ENCODE measurements at regions of chr6 and their contacts with region 1.

Region 1: GRCh38 chr6:41713161-41713649 is 22.2 kb downstream of the TFEB start:
- DNase-seq: peak; percentile 89 to 93
- H3K4me3 ChIP-seq: no peak overlapping the region
- H3K27ac ChIP-seq: peak overlapping the region; percentile 58
- H3K4me1 ChIP-seq: peaks cover 35% of the 10 kb centered on the region
- H3K27me3 ChIP-seq: no peaks in the 10 kb centered on the region
- CTCF ChIP-seq: no peak

Region 2: DNA sequence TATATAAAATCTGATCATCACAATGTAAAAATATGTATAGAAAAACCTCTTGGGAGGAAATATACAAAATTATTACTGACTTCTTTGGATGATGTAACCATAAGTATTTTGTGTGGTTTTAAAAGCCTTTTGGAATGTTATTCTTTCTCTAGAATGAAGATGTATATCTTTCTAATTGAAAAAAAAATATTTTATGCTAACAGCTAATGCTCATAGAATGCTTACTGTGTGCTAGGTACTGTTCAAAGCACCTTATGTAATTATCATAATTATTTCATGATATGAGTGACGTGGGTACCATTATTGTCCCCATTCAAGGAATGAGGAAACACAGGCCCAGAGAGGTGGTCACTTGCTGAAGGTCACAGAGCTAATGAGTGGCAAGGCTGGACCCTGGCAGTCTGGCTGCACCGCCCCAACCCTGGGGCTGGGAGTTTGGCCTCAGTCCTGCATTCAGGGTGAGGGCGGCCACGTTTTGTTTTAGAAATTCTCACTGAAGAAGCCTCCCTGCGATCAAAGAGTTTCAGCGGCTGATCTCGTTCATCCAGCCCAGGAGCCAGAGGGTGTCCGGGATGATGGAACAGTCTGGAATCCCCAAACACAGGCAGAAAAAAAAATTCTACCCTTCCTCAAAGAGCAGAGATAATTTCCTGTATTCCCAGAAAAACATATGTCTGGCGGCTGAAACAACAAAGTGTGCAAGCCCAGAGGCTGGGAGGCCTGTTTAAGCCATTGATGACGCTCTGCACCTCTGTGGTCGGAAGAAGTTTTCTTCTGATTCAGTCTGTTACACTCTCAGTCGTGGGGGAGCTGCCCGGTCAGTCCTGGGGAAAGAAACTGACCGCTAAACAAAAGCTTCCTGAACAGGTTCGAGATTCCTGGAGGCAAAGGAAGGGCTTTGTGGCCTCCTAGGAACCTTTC is 15.1 kb before region 1 on chr6:
- CTCF ChIA-PET with region 1: interaction called, 6 read pairs
- POLR2A ChIA-PET with region 1: interaction called, 6 read pairs
- intact Hi-C with region 1: loop called (anchors 1 kb)
- DNase-seq: peak; percentile 65 to 85
- H3K4me3 ChIP-seq: no peak overlapping the region
- H3K27ac ChIP-seq: peak overlapping the region; percentile 78
- H3K4me1 ChIP-seq: peaks cover 28% of the 10 kb centered on the region
- H3K27me3 ChIP-seq: no peaks in the 10 kb centered on the region
- CTCF ChIP-seq: no peak

Region 3: GRCh38 chr6:41723530-41724227 is 10.5 kb after region 1 on chr6:
- CTCF ChIA-PET with region 1: no interaction called
- POLR2A ChIA-PET with region 1: no interaction called
- intact Hi-C with region 1: loop called (anchors 1 kb)
- DNase-seq: peak; percentile 69 to 73
- H3K4me3 ChIP-seq: no peak overlapping the region
- H3K27ac ChIP-seq: peak overlapping the region; percentile 46
- H3K4me1 ChIP-seq: peaks cover 17% of the 10 kb centered on the region
- H3K27me3 ChIP-seq: no peaks in the 10 kb centered on the region
- CTCF ChIP-seq: no peak

Region 4: DNA sequence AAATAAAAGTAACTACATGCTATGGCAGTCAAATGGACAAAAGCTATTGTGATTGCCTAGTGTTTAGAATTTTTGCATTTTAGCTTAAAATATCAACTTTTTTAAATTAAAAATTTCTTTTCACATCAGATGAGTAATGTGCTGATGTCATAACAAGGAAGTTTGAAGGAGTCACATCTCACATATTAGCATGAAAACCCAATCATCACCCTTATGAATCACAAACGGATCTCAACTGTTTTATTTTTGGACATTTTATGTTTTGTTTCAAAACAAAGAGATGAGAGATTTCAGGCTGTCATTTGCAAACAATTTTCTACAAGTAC is 792.1 kb after region 1 on chr6:
- CTCF ChIA-PET with region 1: no interaction called
- POLR2A ChIA-PET with region 1: interaction called, 16 read pairs
- intact Hi-C with region 1: no loop called
- DNase-seq: peak in 1 of 2 experiments; percentile 56
- H3K4me3 ChIP-seq: peak overlapping the region; percentile 39; the same call in 1 of the 2 replicates
- H3K27ac ChIP-seq: peak overlapping the region; percentile 71
- H3K4me1 ChIP-seq: peaks cover 11% of the 10 kb centered on the region; the same call in 1 of the 2 replicates
- H3K27me3 ChIP-seq: no peaks in the 10 kb centered on the region
- CTCF ChIP-seq: no peak